ENCODE measurements at regions of chr17 and their contacts with region 1.

Region 1: DNA sequence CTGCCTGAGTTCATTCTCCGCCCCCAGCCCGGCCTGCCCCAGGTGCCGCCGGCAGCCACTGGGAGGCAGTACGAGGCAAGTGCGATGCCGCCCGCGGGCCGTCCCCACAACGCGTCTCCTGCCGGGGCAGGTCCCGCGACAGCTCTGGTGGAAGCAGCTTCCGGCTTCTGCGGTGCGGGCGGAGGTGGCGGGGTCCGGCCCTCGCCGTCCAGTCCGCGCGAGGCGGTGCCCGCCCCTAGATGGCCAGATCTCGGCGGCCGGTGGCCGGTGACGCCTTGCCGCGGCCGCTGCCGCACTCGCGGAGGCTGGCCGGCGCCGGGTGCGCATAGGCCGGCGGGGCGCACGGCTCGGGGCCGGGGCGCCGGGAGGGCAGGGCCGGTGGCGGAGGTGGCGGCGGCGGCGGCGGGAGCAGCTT is 1.8 kb downstream of the GJD3 start:
- DNase-seq: peak; percentile 84 to 93 (median 88)
- H3K4me3 ChIP-seq: peak overlapping the region in 1 of 3 donors; percentile 37
- H3K27ac ChIP-seq: no peak overlapping the region
- H3K4me1 ChIP-seq: peaks cover 0 to 4% (median 3%) of the 10 kb centered on the region in 3 donors
- H3K27me3 ChIP-seq: peaks cover 5% of the 10 kb centered on the region
- CTCF ChIP-seq: peak; percentile 56

Region 2: GRCh38 chr17:39668199-39668966 is 694.3 kb before region 1 on chr17 and contains the start of gene PNMT:
- intact Hi-C with region 1: no loop called
- DNase-seq: peak; percentile 76 to 89 (median 84)
- H3K4me3 ChIP-seq: peak within 1 kb of the TSS in 1 of 3 donors; percentile 17
- H3K27ac ChIP-seq: no peak within 1 kb of the TSS
- H3K4me1 ChIP-seq: peaks cover 0 to 33% (median 16%) of the 10 kb centered on the region in 3 donors
- H3K27me3 ChIP-seq: no peaks in the 10 kb centered on the region
- CTCF ChIP-seq: peak; percentile 73
- total RNA-seq, gene PNMT: 8.2 TPM

Region 3: DNA sequence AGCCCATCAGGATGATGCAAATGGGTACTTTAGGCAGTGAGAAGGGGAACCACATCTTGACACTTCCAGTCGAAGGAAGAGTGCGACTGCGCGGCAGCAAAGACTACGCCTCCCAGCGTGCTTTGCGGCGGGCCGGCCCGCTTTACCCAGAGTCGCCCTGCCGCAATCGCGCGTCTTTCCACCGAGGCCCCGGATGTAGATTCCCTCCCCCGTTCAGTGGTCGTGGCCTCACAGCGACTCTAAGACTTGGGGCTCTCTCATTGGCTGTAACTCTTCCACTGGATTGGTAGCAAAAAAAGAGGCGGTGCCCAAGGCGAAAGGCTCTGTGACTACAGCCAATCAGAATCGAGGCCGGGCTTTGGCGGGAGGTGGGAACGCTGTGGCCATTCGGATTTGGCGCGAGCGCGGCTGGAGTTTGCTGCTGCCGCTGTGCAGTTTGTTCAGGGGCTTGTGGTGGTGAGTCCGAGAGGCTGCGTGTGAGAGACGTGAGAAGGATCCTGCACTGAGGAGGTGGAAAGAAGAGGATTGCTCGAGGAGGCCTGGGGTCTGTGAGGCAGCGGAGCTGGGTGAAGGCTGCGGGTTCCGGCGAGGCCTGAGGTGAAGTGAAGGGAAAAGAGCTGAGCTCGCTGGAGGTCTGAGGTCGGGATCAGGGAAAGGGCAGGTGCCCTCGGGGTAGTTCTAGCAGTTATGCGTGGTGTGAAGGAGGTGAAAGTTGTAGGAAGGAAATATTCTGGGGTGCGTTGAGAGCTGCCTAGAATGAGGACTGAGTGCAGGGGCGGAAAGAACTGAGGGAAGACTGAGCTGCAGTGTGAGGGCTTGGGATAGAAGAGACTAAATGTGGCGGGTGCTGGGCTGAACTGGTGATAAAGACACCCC is 75.0 kb before region 1 on chr17 and contains the start of gene CDC6:
- intact Hi-C with region 1: no loop called
- DNase-seq: peak; percentile 99 to 100 (median 99)
- H3K4me3 ChIP-seq: peak within 1 kb of the TSS; percentile 73 to 89 (median 75)
- H3K27ac ChIP-seq: no peak within 1 kb of the TSS
- H3K4me1 ChIP-seq: peaks cover 0 to 13% (median 10%) of the 10 kb centered on the region in 3 donors
- H3K27me3 ChIP-seq: no peaks in the 10 kb centered on the region
- CTCF ChIP-seq: no peak
- total RNA-seq, gene CDC6: 1.7 TPM

Region 4: GRCh38 chr17:40417609-40418427 is 55.1 kb after region 1 on chr17 and contains the start of gene TOP2A:
- intact Hi-C with region 1: loop called (anchors 10 kb)
- DNase-seq: peak; percentile 95 to 100 (median 99)
- H3K4me3 ChIP-seq: peak within 1 kb of the TSS; percentile 62 to 90 (median 82)
- H3K27ac ChIP-seq: peak within 1 kb of the TSS in 1 of 2 donors; percentile 12
- H3K4me1 ChIP-seq: peaks cover 0 to 7% (median 4%) of the 10 kb centered on the region in 3 donors
- H3K27me3 ChIP-seq: no peaks in the 10 kb centered on the region
- CTCF ChIP-seq: no peak
- total RNA-seq, gene TOP2A: 2.7 TPM

Measured in kidney (tissue), 22 donors.